Activated CD8-positive, alpha-beta T cell treated with anti-CD3 and anti-CD28 coated beads for 36 hours (primary cell): ENCODE measurements at regions of chr9 and their contacts with region 1.

Region 1: GRCh38 chr9:92276331-92277032 is 17.0 kb downstream of the IARS1 start:
- DNase-seq: no peak
- ATAC-seq: peak; percentile 34
- H3K4me3 Mint-ChIP-seq: no peak overlapping the region
- H3K27ac Mint-ChIP-seq: peak overlapping the region; percentile 66
- H3K4me1 Mint-ChIP-seq: peaks cover 36% of the 10 kb centered on the region
- H3K27me3 Mint-ChIP-seq: no peaks in the 10 kb centered on the region
- CTCF ChIP-seq: no peak

Region 2: DNA sequence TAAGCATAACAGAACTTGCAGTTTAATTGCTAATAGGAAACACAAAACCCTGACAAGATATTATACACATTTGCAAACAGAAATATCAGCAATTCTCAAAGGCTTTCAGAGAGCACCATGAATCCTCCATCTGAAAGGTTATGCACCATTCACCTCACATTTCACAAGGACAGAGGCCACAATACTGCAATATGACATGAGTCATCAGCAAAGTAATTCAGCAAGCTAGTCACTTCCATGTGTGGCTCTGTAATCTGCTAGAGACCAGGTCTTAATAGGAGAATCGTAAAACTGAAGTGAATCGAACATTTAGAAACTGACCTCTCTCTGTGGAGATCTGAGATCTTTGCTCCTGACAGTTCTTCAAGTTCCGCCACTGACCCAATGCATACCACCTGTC is 11.3 kb before region 1 on chr9:
- CTCF ChIA-PET with region 1: interaction called, 4 read pairs
- POLR2A ChIA-PET with region 1: interaction called, 10 read pairs
- intact Hi-C with region 1: no loop called
- DNase-seq: no peak
- ATAC-seq: no peak
- H3K4me3 Mint-ChIP-seq: no peak overlapping the region
- H3K27ac Mint-ChIP-seq: no peak overlapping the region
- H3K4me1 Mint-ChIP-seq: peaks cover 4% of the 10 kb centered on the region
- H3K27me3 Mint-ChIP-seq: no peaks in the 10 kb centered on the region
- CTCF ChIP-seq: no peak

Region 3: DNA sequence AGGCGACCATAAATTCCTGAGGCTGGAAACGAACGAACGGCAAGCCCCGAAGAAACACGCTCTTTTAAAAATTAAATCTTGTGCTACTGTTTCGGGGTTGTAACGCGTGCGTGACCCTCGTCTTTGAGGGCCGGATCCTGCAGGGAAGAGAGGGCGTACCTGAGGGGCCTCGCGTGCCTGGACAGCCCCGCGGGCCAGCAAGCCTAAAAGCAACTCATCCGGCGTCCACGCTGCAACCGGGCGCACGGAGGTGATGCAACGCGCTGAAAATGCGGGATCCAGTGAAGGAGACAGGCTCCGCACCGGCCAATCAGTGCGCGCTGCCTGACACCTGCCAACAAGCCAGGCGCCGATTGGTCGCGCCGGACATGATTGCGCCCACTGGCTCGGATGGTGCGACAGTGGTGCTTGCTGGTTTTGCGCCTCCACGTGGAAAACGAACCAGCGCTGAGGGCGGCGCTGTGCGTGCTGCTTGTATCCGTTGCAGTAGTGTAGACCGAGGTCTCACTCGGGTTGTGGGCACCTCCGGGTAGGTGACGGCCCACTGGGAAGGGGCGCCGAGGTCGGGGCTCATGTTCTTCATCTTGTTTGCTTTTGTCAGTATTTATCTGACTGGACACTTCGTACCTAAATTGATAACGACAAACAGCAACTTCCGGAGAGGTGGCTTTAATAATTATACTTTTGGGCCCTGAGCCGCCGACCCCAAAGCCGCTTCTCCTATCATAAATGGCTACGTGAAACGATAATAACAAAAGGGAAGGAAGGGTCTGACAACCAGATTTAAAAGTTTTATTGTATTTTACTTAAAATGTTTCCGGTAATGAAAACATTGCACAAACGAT is 17.2 kb after region 1 on chr9 and contains the start of gene IARS1:
- CTCF ChIA-PET with region 1: interaction called, 7 read pairs
- POLR2A ChIA-PET with region 1: interaction called, 15 read pairs
- intact Hi-C with region 1: no loop called
- DNase-seq: peak; percentile 100
- ATAC-seq: peak; percentile 89
- H3K4me3 Mint-ChIP-seq: peak within 1 kb of the TSS; percentile 85
- H3K27ac Mint-ChIP-seq: peak within 1 kb of the TSS; percentile 99
- H3K4me1 Mint-ChIP-seq: peaks cover 52% of the 10 kb centered on the region
- H3K27me3 Mint-ChIP-seq: no peaks in the 10 kb centered on the region
- CTCF ChIP-seq: no peak
- total RNA-seq, gene IARS1: 247 to 251 TPM

Region 4: DNA sequence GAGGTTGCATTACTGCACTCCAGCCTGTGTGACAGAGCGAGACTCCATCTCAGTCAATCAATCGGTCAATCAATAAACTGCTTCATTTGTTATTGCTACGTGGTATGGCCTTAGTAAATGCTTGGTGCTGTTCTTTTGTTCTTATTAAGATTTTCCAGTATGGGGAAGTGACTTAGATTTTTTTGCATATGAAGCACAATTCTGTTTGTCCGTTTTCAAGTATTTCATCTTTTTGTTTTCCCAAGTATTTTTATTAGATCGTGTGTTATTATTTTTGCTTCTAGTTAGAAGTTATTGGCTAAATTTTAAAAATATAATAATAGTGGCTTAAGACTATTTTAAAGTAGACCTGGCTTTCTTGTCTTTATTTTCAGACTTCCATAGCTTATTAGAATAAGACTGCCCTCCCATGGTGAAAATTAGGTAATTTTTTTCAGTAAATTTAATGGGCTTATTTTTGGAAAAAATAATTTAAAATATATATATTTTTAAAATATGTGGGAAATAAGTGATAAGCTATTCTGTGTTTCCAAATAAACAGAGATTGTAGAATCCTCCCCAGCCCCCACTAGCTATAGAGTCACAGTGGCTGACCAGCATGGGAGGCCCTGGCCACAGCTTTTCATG is 162.5 kb after region 1 on chr9:
- CTCF ChIA-PET with region 1: no interaction called
- POLR2A ChIA-PET with region 1: no interaction called
- intact Hi-C with region 1: no loop called
- DNase-seq: no peak
- ATAC-seq: no peak
- H3K4me3 Mint-ChIP-seq: no peak overlapping the region
- H3K27ac Mint-ChIP-seq: no peak overlapping the region
- H3K4me1 Mint-ChIP-seq: peaks cover 8% of the 10 kb centered on the region
- H3K27me3 Mint-ChIP-seq: no peaks in the 10 kb centered on the region
- CTCF ChIP-seq: peak; percentile 28